ENCODE measurements at regions of chr10 and their contacts with region 1.

Region 1: DNA sequence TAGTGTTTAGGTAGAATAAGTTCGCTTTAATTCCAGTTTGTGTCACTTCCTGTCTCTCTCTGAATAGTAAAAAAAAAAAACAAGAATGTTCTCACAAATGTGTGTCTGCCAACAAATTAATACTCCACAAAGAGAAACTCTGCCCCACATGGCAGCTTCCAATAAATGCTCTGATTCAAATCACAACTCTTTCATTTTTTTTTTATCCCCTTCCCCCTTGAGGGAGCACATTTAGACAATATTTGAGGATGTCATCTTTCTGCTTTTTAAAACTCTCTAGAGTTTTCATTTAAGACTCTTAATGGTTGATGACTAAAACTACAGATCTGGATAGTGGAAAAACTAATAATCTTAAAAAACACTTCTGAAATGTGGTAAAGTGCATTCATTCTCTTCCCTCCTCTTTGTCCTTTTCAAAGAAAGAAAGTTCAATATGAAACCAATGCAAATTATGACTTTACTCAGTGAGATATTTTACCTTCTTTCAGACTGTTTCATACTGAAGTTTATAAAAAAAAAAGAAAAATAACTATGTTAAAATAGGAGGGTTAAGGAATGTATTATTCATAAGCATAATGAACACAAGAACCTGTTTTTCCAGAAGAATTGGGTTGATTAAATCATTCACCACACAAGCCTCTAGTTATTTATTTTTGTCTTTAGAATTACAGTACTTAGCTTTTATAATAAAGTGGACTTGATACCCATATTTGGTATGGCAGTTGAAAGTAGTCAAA is 42.3 kb downstream of the ARID5B start:
- DNase-seq: peak; percentile 7 to 88
- H3K4me3 ChIP-seq: peak overlapping the region; percentile 37; the same call in 1 of the 2 replicates
- H3K27ac ChIP-seq: peak overlapping the region; percentile 83
- H3K4me1 ChIP-seq: peaks cover 53% of the 10 kb centered on the region
- H3K27me3 ChIP-seq: no peaks in the 10 kb centered on the region
- CTCF ChIP-seq: no peak

Region 2: DNA sequence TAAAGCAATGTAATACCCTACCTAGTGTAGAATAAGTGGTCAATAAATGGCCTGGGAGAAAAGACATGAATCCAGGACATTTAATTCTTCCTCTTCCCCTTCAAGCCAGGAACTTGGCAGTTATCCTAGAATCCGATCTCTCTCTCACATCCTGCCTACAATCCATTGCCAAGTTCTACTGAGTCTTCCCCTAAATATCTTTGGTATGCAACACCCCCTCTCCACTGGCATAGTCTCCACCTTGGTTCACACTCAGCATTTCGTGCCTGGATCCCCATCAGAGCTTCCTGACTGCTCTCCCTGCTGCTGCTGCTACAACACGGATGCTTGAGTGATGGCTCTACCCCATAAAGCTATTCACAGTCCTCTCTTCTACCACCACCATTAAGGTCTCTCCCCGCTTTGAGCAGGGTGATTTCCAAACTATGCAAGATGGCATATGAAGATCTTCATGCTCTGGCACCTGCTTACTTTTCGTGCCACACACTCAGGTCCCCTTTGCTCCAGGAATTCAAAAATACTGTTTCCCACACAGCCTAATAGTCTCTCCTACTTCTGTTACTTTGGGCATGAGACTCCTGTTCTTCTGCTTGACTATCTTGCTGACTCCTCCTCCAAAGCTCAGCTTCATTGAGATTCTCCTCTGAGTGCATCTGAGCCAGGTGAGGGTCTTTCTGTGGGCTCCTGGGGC is 1559.0 kb before region 1 on chr10:
- CTCF ChIA-PET with region 1: no interaction called
- POLR2A ChIA-PET with region 1: interaction called, 11 read pairs
- intact Hi-C with region 1: no loop called
- DNase-seq: peak; percentile 77 to 95
- H3K4me3 ChIP-seq: no peak overlapping the region
- H3K27ac ChIP-seq: peak overlapping the region; percentile 55
- H3K4me1 ChIP-seq: peaks cover 41% of the 10 kb centered on the region
- H3K27me3 ChIP-seq: no peaks in the 10 kb centered on the region
- CTCF ChIP-seq: no peak

Region 3: GRCh38 chr10:61529208-61529607 is 414.6 kb before region 1 on chr10:
- CTCF ChIA-PET with region 1: no interaction called
- POLR2A ChIA-PET with region 1: no interaction called
- intact Hi-C with region 1: no loop called
- DNase-seq: no peak
- H3K4me3 ChIP-seq: no peak overlapping the region
- H3K27ac ChIP-seq: no peak overlapping the region
- H3K4me1 ChIP-seq: no peaks in the 10 kb centered on the region; the same call in 1 of the 2 replicates
- H3K27me3 ChIP-seq: no peaks in the 10 kb centered on the region
- CTCF ChIP-seq: no peak

Region 4: GRCh38 chr10:61910894-61911293 is 32.9 kb before region 1 on chr10:
- CTCF ChIA-PET with region 1: no interaction called
- POLR2A ChIA-PET with region 1: no interaction called
- intact Hi-C with region 1: no loop called
- DNase-seq: no peak
- H3K4me3 ChIP-seq: no peak overlapping the region
- H3K27ac ChIP-seq: no peak overlapping the region
- H3K4me1 ChIP-seq: no peaks in the 10 kb centered on the region
- H3K27me3 ChIP-seq: no peaks in the 10 kb centered on the region
- CTCF ChIP-seq: no peak

Region 5: DNA sequence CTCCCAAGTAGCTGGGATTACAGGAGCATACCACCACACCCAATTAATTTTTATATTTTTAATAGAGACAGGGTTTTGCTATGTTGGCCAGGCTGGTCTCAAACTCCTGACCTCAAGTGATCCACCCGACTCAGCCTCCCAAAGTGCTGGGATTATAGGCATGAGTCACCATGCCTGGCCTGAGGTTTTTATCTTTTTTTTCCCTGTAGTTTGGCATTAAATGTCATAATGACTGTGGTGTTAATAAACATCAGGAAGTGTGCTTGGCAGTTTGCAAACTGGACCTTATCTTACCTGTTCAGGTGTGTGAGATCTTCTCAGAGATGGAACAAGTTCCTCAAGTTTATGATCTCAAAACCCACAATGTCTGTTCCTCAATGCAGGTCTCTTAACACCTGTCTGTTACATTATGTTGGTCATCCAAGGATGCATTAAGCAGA is 37.6 kb after region 1 on chr10:
- CTCF ChIA-PET with region 1: no interaction called
- POLR2A ChIA-PET with region 1: no interaction called
- intact Hi-C with region 1: loop called (anchors 5 kb)
- DNase-seq: peak; percentile 45 to 95
- H3K4me3 ChIP-seq: no peak overlapping the region
- H3K27ac ChIP-seq: peak overlapping the region; percentile 48
- H3K4me1 ChIP-seq: peaks cover 15% of the 10 kb centered on the region
- H3K27me3 ChIP-seq: no peaks in the 10 kb centered on the region
- CTCF ChIP-seq: no peak

Region 6: GRCh38 chr10:62095181-62096071 is 151.6 kb after region 1 on chr10:
- CTCF ChIA-PET with region 1: no interaction called
- POLR2A ChIA-PET with region 1: no interaction called
- intact Hi-C with region 1: loop called (anchors 5 kb)
- DNase-seq: peak in 1 of 2 experiments; percentile 56
- H3K4me3 ChIP-seq: 0 out of 2 replicates have a peak overlapping the region, but pooled peaks have one; percentile 1
- H3K27ac ChIP-seq: peak overlapping the region; percentile 62
- H3K4me1 ChIP-seq: peaks cover 53% of the 10 kb centered on the region
- H3K27me3 ChIP-seq: no peaks in the 10 kb centered on the region
- CTCF ChIP-seq: no peak

Region 7: DNA sequence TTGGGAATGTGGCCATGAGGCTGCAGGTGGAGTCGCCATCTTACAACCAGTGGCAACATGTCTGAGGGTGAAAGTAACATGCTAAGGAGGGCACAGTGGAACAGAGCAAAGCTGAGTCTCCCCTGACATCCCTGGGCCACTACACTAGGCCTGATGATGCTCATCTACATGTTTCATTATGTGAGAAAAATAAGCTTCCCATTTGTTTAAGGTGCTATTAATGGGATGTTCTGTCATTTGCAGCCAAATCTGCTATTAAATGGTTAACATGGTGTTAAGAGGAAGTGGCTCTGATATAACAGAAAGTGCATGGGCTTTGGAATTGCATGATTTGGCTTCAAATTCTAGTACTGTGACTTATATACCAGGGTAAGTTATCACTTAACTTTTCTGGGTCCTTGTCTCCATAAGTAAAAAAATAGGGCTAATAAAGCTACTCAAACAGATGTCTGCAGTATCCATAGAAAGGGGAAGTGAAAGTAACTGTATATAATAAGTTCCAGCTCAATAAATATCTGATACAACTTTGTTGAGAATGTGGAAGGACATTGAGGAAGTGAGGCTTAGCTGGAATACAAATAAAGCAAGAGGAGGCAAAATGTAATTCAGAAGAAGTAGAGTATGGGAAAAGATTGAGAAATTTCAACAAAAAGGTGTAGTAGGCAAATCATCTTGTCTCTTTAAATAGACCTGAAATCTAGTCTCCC is 165.9 kb after region 1 on chr10:
- CTCF ChIA-PET with region 1: no interaction called
- POLR2A ChIA-PET with region 1: no interaction called
- intact Hi-C with region 1: loop called (anchors 5 kb)
- DNase-seq: no peak
- H3K4me3 ChIP-seq: no peak overlapping the region
- H3K27ac ChIP-seq: peak overlapping the region; percentile 49
- H3K4me1 ChIP-seq: peaks cover 80% of the 10 kb centered on the region
- H3K27me3 ChIP-seq: no peaks in the 10 kb centered on the region
- CTCF ChIP-seq: no peak

Measured in PC-9 (cell line).